Activated naive CD4-positive, alpha-beta T cell treated with anti-CD3 and anti-CD28 coated beads for 36 hours (primary cell): ENCODE measurements at regions of chrX and their contacts with region 1.

Region 1: GRCh38 chrX:104098151-104098808 is 14.0 kb upstream of the ZCCHC18 start:
- DNase-seq: peak; percentile 67
- H3K4me3 Mint-ChIP-seq: no peak overlapping the region
- H3K27ac Mint-ChIP-seq: no peak overlapping the region
- H3K4me1 Mint-ChIP-seq: peaks cover 2% of the 10 kb centered on the region
- H3K27me3 Mint-ChIP-seq: peaks cover 3% of the 10 kb centered on the region

Region 2: GRCh38 chrX:103081051-103081450 is 1017.2 kb before region 1 on chrX:
- CTCF ChIA-PET with region 1: no interaction called
- intact Hi-C with region 1: no loop called
- DNase-seq: no peak
- H3K4me3 Mint-ChIP-seq: no peak overlapping the region
- H3K27ac Mint-ChIP-seq: no peak overlapping the region
- H3K4me1 Mint-ChIP-seq: no peaks in the 10 kb centered on the region
- H3K27me3 Mint-ChIP-seq: no peaks in the 10 kb centered on the region

Region 3: GRCh38 chrX:104113222-104113965 is 15.1 kb after region 1 on chrX:
- CTCF ChIA-PET with region 1: interaction called, 18 read pairs
- intact Hi-C with region 1: loop called (anchors 1 kb)
- DNase-seq: peak; percentile 62
- H3K4me3 Mint-ChIP-seq: peak overlapping the region; percentile 74
- H3K27ac Mint-ChIP-seq: no peak overlapping the region
- H3K4me1 Mint-ChIP-seq: peaks cover 33% of the 10 kb centered on the region
- H3K27me3 Mint-ChIP-seq: no peaks in the 10 kb centered on the region

Region 4: GRCh38 chrX:104136241-104137019 is 38.1 kb after region 1 on chrX:
- CTCF ChIA-PET with region 1: interaction called, 30 read pairs
- intact Hi-C with region 1: loop called (anchors 1 kb)
- DNase-seq: peak; percentile 63
- H3K4me3 Mint-ChIP-seq: no peak overlapping the region
- H3K27ac Mint-ChIP-seq: no peak overlapping the region
- H3K4me1 Mint-ChIP-seq: peaks cover 15% of the 10 kb centered on the region
- H3K27me3 Mint-ChIP-seq: no peaks in the 10 kb centered on the region

Region 5: GRCh38 chrX:104270920-104271512 is 172.7 kb after region 1 on chrX:
- CTCF ChIA-PET with region 1: interaction called, 3 read pairs
- intact Hi-C with region 1: loop called (anchors 1 kb)
- DNase-seq: peak; percentile 64
- H3K4me3 Mint-ChIP-seq: peak overlapping the region; percentile 25
- H3K27ac Mint-ChIP-seq: no peak overlapping the region
- H3K4me1 Mint-ChIP-seq: peaks cover 4% of the 10 kb centered on the region
- H3K27me3 Mint-ChIP-seq: peaks cover 8% of the 10 kb centered on the region

Region 6: GRCh38 chrX:104343428-104344129 is 245.3 kb after region 1 on chrX:
- CTCF ChIA-PET with region 1: no interaction called
- intact Hi-C with region 1: loop called (anchors 1 kb)
- DNase-seq: peak; percentile 56
- H3K4me3 Mint-ChIP-seq: no peak overlapping the region
- H3K27ac Mint-ChIP-seq: no peak overlapping the region
- H3K4me1 Mint-ChIP-seq: no peaks in the 10 kb centered on the region
- H3K27me3 Mint-ChIP-seq: no peaks in the 10 kb centered on the region